ENCODE measurements at regions of chr12 and their contacts with region 1.

Region 1: GRCh38 chr12:93100610-93101009 is 171.5 kb upstream of the EEA1 start:
- DNase-seq: no peak
- H3K4me3 ChIP-seq: no peak overlapping the region
- H3K27ac ChIP-seq: no peak overlapping the region
- H3K4me1 ChIP-seq: peaks cover 0 to 26% (median 24%) of the 10 kb centered on the region in 4 donors
- H3K27me3 ChIP-seq: no peaks in the 10 kb centered on the region
- CTCF ChIP-seq: no peak
- EP300 ChIP-seq: no peak
- POLR2A ChIP-seq: no peak

Region 2: DNA sequence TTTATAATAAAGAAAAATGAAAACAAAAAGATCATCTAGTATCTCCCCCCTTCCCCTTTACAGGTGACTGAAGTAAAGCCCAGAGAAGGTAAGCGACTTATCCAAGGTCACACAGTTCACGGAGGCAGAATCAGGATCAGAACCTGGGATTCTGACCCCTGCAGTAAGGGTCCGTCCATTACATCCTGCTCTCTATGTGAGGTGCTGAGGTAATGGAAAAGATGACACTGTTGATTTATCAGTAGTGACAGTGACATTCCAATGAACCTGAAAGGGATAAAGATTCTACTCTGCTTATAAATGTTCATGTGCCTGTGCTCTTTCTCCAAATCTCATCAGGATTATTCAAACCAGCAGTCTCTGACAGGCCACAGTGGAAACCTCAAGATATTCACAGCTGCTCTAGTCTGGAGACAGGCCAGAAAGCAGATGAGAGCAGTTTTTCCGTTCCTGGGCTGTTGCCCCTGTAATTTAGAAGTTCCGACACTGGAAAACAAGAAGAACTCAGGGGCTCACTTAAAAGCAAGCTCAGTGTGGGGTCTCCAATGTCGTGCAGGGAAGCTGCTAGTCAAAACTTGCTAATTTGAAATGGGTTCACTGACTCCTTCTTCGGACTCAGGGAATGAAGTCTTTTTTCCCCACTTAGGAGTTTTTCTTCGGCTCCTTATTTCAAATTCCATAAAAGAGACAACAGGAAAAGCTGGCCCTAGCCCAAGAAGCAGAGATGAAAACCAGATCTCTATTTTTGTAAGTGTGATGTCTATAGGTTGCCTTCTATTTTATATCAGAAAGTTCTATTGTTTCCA is 39.7 kb before region 1 on chr12:
- intact Hi-C with region 1: loop called (anchors 2 kb)
- DNase-seq: peak; percentile 72
- H3K4me3 ChIP-seq: peak overlapping the region in 2 of 4 donors; percentile 10 to 23
- H3K27ac ChIP-seq: peak overlapping the region; percentile 72 to 86 (median 76)
- H3K4me1 ChIP-seq: peaks cover 0 to 32% (median 23%) of the 10 kb centered on the region in 4 donors
- H3K27me3 ChIP-seq: no peaks in the 10 kb centered on the region
- CTCF ChIP-seq: no peak
- EP300 ChIP-seq: peak in 2 of 4 donors; percentile 27 to 68
- POLR2A ChIP-seq: no peak

Region 3: GRCh38 chr12:93183940-93184671 is 83.5 kb after region 1 on chr12:
- intact Hi-C with region 1: loop called (anchors 5 kb)
- DNase-seq: peak; percentile 85
- H3K4me3 ChIP-seq: no peak overlapping the region
- H3K27ac ChIP-seq: peak overlapping the region; percentile 70 to 81 (median 78)
- H3K4me1 ChIP-seq: peaks cover 0 to 38% (median 34%) of the 10 kb centered on the region in 4 donors
- H3K27me3 ChIP-seq: no peaks in the 10 kb centered on the region
- CTCF ChIP-seq: no peak
- EP300 ChIP-seq: peak in 3 of 4 donors; percentile 33 to 48 (median 37)
- POLR2A ChIP-seq: no peak